ENCODE measurements at regions of chr2 and their contacts with region 1.

Region 1: GRCh38 chr2:135563793-135564192 is 32.5 kb downstream of the R3HDM1 start:
- DNase-seq: peak; percentile 6
- H3K4me3 ChIP-seq: no peak overlapping the region
- H3K27ac ChIP-seq: no peak overlapping the region
- H3K4me1 ChIP-seq: no peaks in the 10 kb centered on the region
- H3K27me3 ChIP-seq: no peaks in the 10 kb centered on the region
- CTCF ChIP-seq: no peak

Region 2: GRCh38 chr2:135202756-135203155 is 361.0 kb before region 1 on chr2:
- CTCF ChIA-PET with region 1: no interaction called
- POLR2A ChIA-PET with region 1: no interaction called
- intact Hi-C with region 1: no loop called
- DNase-seq: no peak
- H3K4me3 ChIP-seq: no peak overlapping the region
- H3K27ac ChIP-seq: no peak overlapping the region
- H3K4me1 ChIP-seq: no peaks in the 10 kb centered on the region
- H3K27me3 ChIP-seq: no peaks in the 10 kb centered on the region
- CTCF ChIP-seq: no peak

Region 3: DNA sequence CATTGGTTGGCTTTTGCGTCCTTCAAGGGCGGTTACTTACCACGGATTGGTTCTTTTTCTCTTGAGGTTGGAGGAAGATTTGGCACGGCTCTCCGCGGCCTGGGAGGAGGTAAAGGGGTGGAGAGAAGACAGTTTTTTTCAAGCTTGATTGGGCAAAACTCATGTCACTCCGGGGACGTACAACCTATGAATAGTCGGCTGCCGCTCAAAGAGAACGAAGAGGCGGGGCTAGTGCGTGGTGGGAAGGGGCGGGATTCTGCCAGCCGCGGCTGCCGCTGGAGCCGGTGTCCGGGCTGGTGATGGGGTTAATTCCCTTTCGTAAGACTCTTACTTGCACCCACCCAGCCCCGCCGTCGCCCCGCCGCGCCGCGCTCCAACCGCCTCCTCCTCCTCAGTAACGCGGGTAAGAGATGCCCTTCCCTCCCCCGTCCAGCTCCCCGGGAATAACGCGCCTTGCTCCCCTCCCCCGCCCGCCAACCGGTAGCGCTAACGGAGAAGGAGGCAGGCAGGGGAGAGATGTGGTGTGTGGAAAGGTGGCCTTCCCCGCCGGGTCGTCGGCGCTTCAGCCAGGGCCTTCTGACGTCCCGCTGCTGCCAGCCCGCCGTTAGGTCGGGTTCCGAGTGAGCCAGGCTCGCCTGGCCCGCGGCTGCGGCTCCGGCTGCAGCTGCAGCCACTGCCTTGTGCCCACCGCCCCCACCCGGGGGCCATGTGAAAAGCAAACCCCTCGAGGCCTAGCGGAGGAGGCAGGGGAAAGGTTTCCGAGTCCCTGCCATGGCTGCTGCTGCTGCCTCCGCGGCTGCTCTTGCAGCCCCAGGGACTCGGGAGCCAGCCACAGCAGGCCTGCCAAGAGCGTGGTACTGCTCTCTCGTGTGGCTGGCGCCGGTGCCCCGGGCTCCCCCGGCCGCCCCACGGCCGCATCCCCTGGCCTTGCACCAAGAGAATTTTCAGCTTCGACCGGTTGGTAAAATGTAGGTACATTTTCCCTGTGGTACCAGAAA is 32.3 kb before region 1 on chr2 and contains the start of gene R3HDM1:
- CTCF ChIA-PET with region 1: no interaction called
- POLR2A ChIA-PET with region 1: no interaction called
- intact Hi-C with region 1: no loop called
- DNase-seq: peak; percentile 100
- H3K4me3 ChIP-seq: peak within 1 kb of the TSS; percentile 92
- H3K27ac ChIP-seq: peak within 1 kb of the TSS; percentile 90
- H3K4me1 ChIP-seq: peaks cover 6% of the 10 kb centered on the region
- H3K27me3 ChIP-seq: no peaks in the 10 kb centered on the region
- CTCF ChIP-seq: peak; percentile 41
- total RNA-seq, gene R3HDM1: 65.4 and 66.6 TPM in 2 replicates

Region 4: DNA sequence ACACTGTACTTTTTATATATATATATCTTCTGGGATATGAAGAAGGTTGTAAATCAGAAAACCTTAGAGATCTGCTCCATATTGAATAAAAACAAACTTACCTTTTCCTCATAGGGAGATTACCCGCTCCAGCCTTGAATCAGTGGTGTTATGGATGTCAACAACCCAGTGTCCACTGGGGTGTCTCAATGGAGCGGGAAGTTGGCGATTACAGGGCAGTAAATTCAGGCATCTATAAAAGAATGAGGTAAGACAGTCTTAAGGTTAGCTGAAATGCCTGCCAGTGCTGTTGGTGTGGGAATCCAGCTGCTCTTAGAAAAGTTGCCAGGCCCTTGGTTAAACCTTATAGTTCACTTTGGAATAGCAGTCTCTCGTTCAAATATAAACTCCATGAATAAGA is 69.8 kb after region 1 on chr2:
- CTCF ChIA-PET with region 1: interaction called, 10 read pairs
- POLR2A ChIA-PET with region 1: no interaction called
- intact Hi-C with region 1: no loop called
- DNase-seq: no peak
- H3K4me3 ChIP-seq: no peak overlapping the region
- H3K27ac ChIP-seq: no peak overlapping the region
- H3K4me1 ChIP-seq: no peaks in the 10 kb centered on the region
- H3K27me3 ChIP-seq: no peaks in the 10 kb centered on the region
- CTCF ChIP-seq: no peak

Measured in A673 (cell line).